CD8-positive, alpha-beta memory T cell (primary cell): ENCODE measurements at regions of chr1 and their contacts with region 1.

Region 1: GRCh38 chr1:223748773-223749733 is 36.7 kb downstream of the CAPN2 start:
- DNase-seq: peak; percentile 52 to 75 (median 63)
- H3K4me3 ChIP-seq: peak overlapping the region; percentile 44
- H3K4me3 Mint-ChIP-seq: peak overlapping the region; percentile 50 to 78 (median 71)
- H3K27ac ChIP-seq: no peak overlapping the region
- H3K27ac Mint-ChIP-seq: peak overlapping the region in 6 of 8 donors; percentile 26 to 84 (median 72)
- H3K4me1 ChIP-seq: peaks cover 5% of the 10 kb centered on the region
- H3K4me1 Mint-ChIP-seq: peaks cover 11 to 29% (median 24%) of the 10 kb centered on the region in 3 donors
- H3K27me3 ChIP-seq: no peaks in the 10 kb centered on the region
- H3K27me3 Mint-ChIP-seq: peaks cover 0 to 1% of the 10 kb centered on the region in 2 donors

Region 2: DNA sequence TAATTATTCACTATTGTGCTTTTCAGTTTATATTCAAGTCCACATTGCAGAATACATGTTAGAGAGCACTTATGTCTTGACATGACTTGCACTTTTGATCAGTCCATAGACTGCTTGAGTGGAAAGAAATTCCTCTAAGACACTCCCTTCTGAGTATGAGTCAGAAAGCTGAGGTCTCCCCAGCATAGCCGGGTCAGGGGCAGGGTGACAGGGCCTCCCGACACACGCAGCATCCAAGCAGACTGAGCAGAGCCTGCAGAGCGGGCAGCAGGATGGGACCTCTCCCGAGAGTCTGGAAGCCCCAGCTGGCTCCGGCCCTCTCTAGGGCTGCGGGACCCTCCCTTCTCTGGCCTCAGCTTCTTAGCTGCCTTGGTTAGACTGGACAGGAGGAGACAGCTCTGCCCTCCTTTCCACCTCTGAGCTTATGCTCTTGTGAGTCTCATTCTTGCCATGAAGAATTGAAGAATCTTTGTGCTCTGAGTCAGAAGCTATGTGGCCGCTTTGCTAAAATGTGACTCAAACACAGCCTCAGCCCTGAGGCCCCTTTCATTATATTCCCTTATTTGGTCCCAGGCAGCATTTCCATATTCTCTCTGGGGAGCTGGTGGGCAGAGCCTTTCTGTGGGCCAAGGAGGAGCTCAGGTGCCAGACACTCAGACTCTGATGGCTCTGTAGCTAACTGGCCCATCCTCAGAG is 48.0 kb before region 1 on chr1:
- CTCF ChIA-PET with region 1: interaction called, 169 read pairs
- POLR2A ChIA-PET with region 1: no interaction called
- DNase-seq: no peak
- H3K4me3 ChIP-seq: no peak overlapping the region
- H3K4me3 Mint-ChIP-seq: no peak overlapping the region
- H3K27ac ChIP-seq: peak overlapping the region; percentile 28
- H3K27ac Mint-ChIP-seq: no peak overlapping the region
- H3K4me1 ChIP-seq: peaks cover 7% of the 10 kb centered on the region
- H3K4me1 Mint-ChIP-seq: peaks cover 3 to 12% (median 11%) of the 10 kb centered on the region in 3 donors
- H3K27me3 ChIP-seq: no peaks in the 10 kb centered on the region
- H3K27me3 Mint-ChIP-seq: peaks cover 0 to 2% of the 10 kb centered on the region in 2 donors

Region 3: DNA sequence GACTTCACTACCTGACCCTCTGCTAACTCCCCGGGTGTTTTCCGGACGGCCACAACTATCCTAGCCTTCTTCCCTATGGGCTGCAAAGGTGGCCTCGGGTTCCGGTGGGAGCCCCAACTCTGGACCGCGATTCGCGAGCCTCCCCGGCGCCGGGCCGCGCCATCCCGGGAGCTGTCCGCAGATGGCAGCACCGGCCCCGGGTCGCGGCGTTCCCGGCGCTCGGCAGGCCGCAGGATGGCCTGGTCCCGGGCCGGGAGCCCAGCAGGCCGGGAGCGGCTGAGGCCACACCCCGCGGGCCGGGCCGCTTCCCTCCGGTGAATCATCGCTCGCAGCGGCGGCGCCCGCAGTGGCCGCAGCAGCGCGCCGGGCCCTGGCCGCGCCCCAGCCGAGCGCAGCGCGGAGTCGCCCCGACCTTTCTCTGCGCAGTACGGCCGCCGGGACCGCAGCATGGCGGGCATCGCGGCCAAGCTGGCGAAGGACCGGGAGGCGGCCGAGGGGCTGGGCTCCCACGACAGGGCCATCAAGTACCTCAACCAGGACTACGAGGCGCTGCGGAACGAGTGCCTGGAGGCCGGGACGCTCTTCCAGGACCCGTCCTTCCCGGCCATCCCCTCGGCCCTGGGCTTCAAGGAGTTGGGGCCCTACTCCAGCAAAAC is 36.7 kb before region 1 on chr1 and contains the start of gene CAPN2:
- CTCF ChIA-PET with region 1: interaction called, 94 read pairs
- POLR2A ChIA-PET with region 1: interaction called, 16 read pairs
- DNase-seq: peak; percentile 53 to 72 (median 59)
- H3K4me3 ChIP-seq: peak within 1 kb of the TSS; percentile 78
- H3K4me3 Mint-ChIP-seq: peak within 1 kb of the TSS; percentile 85 to 98 (median 92)
- H3K27ac ChIP-seq: peak within 1 kb of the TSS; percentile 72
- H3K27ac Mint-ChIP-seq: peak within 1 kb of the TSS; percentile 80 to 99 (median 94)
- H3K4me1 ChIP-seq: peaks cover 66% of the 10 kb centered on the region
- H3K4me1 Mint-ChIP-seq: peaks cover 55 to 70% (median 56%) of the 10 kb centered on the region in 3 donors
- H3K27me3 ChIP-seq: no peaks in the 10 kb centered on the region
- H3K27me3 Mint-ChIP-seq: no peaks in the 10 kb centered on the region
- total RNA-seq, gene CAPN2: 79.8 to 82.9 TPM

Region 4: GRCh38 chr1:223726380-223727001 is 22.6 kb before region 1 on chr1:
- CTCF ChIA-PET with region 1: interaction called, 94 read pairs
- POLR2A ChIA-PET with region 1: interaction called, 7 read pairs
- DNase-seq: peak; percentile 48 to 95 (median 81)
- H3K4me3 ChIP-seq: peak overlapping the region; percentile 18
- H3K4me3 Mint-ChIP-seq: peak overlapping the region; percentile 32 to 89 (median 84)
- H3K27ac ChIP-seq: peak overlapping the region; percentile 64
- H3K27ac Mint-ChIP-seq: peak overlapping the region; percentile 85 to 100 (median 96)
- H3K4me1 ChIP-seq: peaks cover 45% of the 10 kb centered on the region
- H3K4me1 Mint-ChIP-seq: peaks cover 73 to 94% (median 88%) of the 10 kb centered on the region in 3 donors
- H3K27me3 ChIP-seq: no peaks in the 10 kb centered on the region
- H3K27me3 Mint-ChIP-seq: no peaks in the 10 kb centered on the region

Region 5: GRCh38 chr1:223738465-223739365 is 10.3 kb before region 1 on chr1:
- CTCF ChIA-PET with region 1: interaction called, 27 read pairs
- POLR2A ChIA-PET with region 1: no interaction called
- DNase-seq: no peak
- H3K4me3 ChIP-seq: no peak overlapping the region
- H3K4me3 Mint-ChIP-seq: no peak overlapping the region
- H3K27ac ChIP-seq: no peak overlapping the region
- H3K27ac Mint-ChIP-seq: peak overlapping the region in 7 of 8 donors; percentile 6 to 86 (median 66)
- H3K4me1 ChIP-seq: no peaks in the 10 kb centered on the region
- H3K4me1 Mint-ChIP-seq: peaks cover 13 to 32% (median 25%) of the 10 kb centered on the region in 3 donors
- H3K27me3 ChIP-seq: no peaks in the 10 kb centered on the region
- H3K27me3 Mint-ChIP-seq: no peaks in the 10 kb centered on the region

Region 6: GRCh38 chr1:223759273-223759672 is 10.2 kb after region 1 on chr1:
- CTCF ChIA-PET with region 1: interaction called, 10 read pairs
- POLR2A ChIA-PET with region 1: interaction called, 3 read pairs
- DNase-seq: no peak
- H3K4me3 ChIP-seq: no peak overlapping the region
- H3K4me3 Mint-ChIP-seq: no peak overlapping the region
- H3K27ac ChIP-seq: no peak overlapping the region
- H3K27ac Mint-ChIP-seq: peak overlapping the region in 1 of 8 donors; percentile 12
- H3K4me1 ChIP-seq: no peaks in the 10 kb centered on the region
- H3K4me1 Mint-ChIP-seq: no peaks in the 10 kb centered on the region
- H3K27me3 ChIP-seq: no peaks in the 10 kb centered on the region
- H3K27me3 Mint-ChIP-seq: no peaks in the 10 kb centered on the region